ENCODE measurements at regions of chr13 and their contacts with region 1.

Region 1: DNA sequence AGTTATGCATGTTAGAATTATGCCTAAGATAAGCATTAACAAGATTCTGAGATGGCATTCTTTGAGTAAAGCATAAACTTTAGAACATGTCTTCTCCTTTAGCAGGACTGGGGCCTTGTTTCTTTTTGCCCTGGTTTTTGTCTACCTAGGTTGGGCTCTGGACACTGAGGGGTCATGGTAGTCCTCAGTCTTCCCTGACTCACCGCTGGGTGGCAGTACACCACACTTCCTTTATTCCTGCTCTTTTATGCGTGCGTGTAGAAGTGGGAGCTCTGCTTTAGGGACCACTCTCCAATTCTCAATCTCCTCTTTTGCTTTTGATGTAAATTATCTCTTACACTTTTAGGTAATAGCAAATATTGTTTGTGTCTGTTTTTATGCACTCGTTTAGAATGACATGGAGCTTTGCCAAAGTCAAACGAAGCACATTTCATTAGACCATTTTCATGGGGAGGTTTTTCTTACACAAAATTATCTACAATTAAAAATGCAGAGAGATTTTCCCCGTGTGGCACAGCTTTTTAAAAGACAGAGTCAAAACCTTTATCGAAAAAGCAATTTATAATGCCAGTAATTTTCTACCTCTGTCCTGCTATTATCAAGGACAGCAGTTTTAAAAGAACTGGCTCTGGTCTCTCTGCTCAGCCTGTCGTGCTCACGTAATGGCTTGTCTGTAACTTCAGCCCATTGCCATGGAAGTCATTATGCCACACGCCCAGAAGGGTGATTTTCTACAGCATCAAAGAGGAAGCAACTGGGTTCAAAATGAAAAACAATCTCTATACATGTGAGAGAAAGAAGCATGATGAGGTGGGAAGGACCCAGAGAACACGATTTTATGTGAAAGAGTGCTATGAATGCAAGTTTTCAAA is 413.9 kb downstream of the COG6 start:
- DNase-seq: peak; percentile 76 to 80 (median 77)
- ATAC-seq: peak; percentile 90 to 96 (median 94)
- H3K4me3 ChIP-seq: peak overlapping the region in 4 of 12 donors; percentile 15 to 38 (median 23)
- H3K27ac ChIP-seq: peak overlapping the region in 2 of 12 donors; percentile 11 to 22
- H3K4me1 ChIP-seq: peaks cover 0 to 10% (median 5%) of the 10 kb centered on the region in 12 donors
- H3K27me3 ChIP-seq: no peaks in the 10 kb centered on the region
- CTCF ChIP-seq: peak; percentile 75 to 94 (median 86)
- POLR2A ChIP-seq: no peak

Region 2: DNA sequence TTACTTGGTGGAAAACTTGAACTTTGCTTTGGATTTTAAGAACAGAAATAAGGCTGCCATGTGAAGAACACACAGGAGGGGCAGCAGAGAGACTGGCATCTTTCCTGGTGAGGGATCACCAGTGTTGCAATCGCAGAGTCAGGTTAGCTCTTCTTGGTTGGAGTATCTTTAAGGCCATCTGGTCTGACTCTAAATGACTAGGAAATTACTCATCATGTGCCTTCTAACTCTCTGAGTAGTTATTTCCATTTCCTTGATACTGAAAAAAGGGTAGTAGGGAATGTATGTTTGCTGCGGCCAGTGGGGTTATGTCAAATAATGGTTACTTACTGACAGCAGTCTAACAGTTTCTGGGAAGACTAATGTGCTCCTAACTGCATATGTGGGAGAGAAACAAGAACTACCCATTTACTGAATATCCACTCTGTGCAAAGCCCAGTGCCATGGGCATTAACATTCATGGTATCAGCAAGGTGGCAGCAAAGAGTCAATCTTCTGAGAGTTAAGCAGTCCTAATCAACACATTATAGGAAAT is 291.8 kb before region 1 on chr13:
- intact Hi-C with region 1: loop called in 1 of 10 experiments (anchors 10 kb)
- DNase-seq: peak in 1 of 5 donors; percentile 31
- ATAC-seq: peak in 1 of 4 donors; percentile 46
- H3K4me3 ChIP-seq: no peak overlapping the region
- H3K27ac ChIP-seq: no peak overlapping the region
- H3K4me1 ChIP-seq: peaks cover 0 to 20% (median 0%) of the 10 kb centered on the region in 12 donors
- H3K27me3 ChIP-seq: no peaks in the 10 kb centered on the region
- CTCF ChIP-seq: peak in 6 of 12 donors; percentile 2 to 32 (median 16)
- POLR2A ChIP-seq: no peak

Region 3: DNA sequence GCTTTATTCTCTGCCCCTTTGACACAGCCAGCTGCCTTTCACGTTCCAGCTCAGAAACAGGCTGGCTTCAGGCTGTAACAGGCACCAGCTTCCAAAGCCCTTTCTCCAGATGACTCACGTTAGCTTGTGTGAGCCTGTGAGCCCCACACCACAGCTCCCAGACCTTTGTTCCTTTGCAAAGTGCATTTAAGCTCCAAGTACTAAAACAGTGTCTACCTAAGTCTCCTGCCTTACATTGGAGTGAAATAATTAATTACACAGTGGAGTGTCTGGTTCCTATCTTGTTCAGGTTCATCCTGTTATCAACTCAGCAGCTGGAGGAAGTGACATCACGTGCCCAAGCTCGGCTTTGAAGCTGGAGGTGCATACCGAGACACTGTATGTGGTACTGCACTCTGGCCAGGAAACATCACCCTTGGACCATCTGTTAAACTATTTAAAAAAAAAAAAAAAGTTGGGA is 121.3 kb after region 1 on chr13:
- intact Hi-C with region 1: loop called in 1 of 10 experiments (anchors 10 kb)
- DNase-seq: peak in 4 of 5 donors; percentile 30 to 65 (median 49)
- ATAC-seq: peak; percentile 43 to 72 (median 58)
- H3K4me3 ChIP-seq: no peak overlapping the region
- H3K27ac ChIP-seq: peak overlapping the region; percentile 36 to 84 (median 70)
- H3K4me1 ChIP-seq: peaks cover 5 to 52% (median 39%) of the 10 kb centered on the region in 12 donors
- H3K27me3 ChIP-seq: no peaks in the 10 kb centered on the region
- CTCF ChIP-seq: no peak
- POLR2A ChIP-seq: no peak

Region 4: GRCh38 chr13:40388617-40389016 is 319.2 kb after region 1 on chr13:
- intact Hi-C with region 1: loop called in 1 of 10 experiments (anchors 10 kb)
- DNase-seq: peak in 1 of 5 donors; percentile 68
- ATAC-seq: peak in 3 of 4 donors; percentile 34 to 77 (median 72)
- H3K4me3 ChIP-seq: peak overlapping the region in 1 of 12 donors; percentile 34
- H3K27ac ChIP-seq: peak overlapping the region in 1 of 12 donors; percentile 85
- H3K4me1 ChIP-seq: peaks cover 0 to 7% (median 0%) of the 10 kb centered on the region in 12 donors
- H3K27me3 ChIP-seq: no peaks in the 10 kb centered on the region
- CTCF ChIP-seq: no peak
- POLR2A ChIP-seq: no peak

Region 5: DNA sequence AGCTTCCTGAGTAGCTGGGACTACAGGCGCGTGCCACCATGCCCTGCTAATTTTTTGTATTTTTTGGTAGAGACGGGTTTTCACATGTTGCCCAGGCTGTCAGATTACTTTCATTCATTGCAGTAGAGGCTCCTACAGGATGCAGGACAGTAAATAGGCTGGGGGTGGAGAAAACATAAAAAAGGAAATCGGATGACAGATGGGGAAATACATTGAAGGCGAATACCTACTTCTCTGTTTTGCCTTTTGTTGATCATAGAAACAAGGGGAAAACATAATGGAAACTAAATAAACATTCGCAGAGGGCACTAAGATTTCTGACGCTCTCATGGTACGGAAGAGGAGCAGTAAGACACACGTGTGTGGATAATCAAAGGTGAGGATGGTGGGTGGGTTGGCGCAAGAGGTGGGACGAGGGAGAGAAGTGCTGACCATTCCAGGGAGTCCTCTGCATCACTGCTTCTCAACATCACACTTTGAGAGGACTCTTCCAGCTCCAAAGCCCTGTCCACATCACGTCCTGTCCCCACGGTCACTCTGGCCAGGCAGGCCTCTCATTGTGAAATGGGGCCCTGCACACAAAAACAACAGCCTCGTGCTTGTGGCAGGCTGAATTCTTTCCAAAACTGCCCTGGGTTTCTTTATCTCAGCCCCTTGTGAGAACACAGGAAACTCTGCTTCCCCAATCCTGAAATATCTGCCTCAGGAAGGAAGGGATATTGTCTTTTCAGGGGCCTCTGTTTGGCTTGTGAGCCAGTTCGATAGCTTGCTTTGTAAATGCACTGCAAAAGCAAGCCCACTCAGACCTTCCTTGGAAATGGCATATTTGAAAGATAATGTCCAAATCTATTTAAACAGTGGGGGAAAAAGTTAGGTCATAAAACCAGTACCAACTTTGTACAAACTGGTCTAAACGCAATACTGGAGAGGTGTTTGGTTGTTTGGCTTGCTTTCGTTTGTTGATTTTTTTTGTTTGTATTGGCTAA is 408.5 kb after region 1 on chr13:
- intact Hi-C with region 1: loop called in 1 of 10 experiments (anchors 10 kb)
- DNase-seq: peak in 4 of 5 donors; percentile 41 to 68 (median 64)
- ATAC-seq: peak; percentile 40 to 82 (median 64)
- H3K4me3 ChIP-seq: peak overlapping the region in 1 of 12 donors; percentile 5
- H3K27ac ChIP-seq: peak overlapping the region in 11 of 12 donors; percentile 51 to 75 (median 66)
- H3K4me1 ChIP-seq: peaks cover 6 to 53% (median 35%) of the 10 kb centered on the region in 12 donors
- H3K27me3 ChIP-seq: no peaks in the 10 kb centered on the region
- CTCF ChIP-seq: no peak
- POLR2A ChIP-seq: no peak

Region 6: GRCh38 chr13:40682449-40683240 is 613.2 kb after region 1 on chr13:
- intact Hi-C with region 1: loop called (anchors 1 to 5 kb)
- DNase-seq: no peak
- ATAC-seq: no peak
- H3K4me3 ChIP-seq: no peak overlapping the region
- H3K27ac ChIP-seq: no peak overlapping the region
- H3K4me1 ChIP-seq: peaks cover 0 to 18% (median 5%) of the 10 kb centered on the region in 12 donors
- H3K27me3 ChIP-seq: no peaks in the 10 kb centered on the region
- CTCF ChIP-seq: peak; percentile 59 to 85 (median 72)
- POLR2A ChIP-seq: no peak